ENCODE measurements at regions of chr7 and their contacts with region 1.

Region 1: DNA sequence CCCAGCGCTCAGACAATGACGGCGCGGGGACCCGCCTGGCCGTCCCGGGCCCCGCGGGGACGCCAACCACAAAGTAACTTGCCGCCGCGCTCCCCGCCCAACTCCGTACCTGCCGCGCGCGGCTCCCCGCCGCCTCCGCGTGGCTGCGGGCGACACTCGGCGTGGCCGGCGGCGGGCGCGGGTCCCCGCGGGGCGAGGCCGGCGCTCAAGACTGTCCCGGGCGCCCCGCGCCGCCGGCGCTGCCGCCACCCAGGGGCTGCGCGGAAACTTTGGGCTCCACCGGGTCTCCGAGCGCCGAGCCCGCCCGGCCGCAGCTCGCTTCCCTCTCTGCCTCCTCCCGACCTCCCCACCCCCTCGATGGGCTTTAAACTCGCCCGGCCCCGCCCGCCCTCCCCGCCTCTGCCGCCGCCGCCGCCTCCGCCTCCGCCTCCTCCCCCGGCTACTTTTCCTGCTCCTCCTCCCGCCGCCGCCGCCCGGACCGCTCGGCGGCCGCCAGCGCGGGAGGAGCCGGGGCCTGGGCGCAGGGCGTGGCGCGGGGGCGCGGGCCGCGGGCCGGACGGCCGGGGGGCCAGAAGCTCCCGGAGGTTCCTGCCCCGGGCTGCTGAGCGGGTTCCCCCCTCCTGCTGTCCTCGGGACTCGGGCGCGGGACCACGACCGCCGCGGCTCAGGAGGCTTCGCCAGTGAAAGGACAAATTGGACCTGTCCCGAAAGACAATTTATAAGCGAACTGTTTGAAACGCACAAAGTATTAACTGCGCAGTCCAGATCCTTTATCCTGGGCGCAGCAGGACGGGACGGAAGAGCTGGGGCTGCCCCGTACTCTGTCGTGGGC is 10.6 kb upstream of the GRB10 start:
- DNase-seq: peak; percentile 73
- H3K4me3 ChIP-seq: peak overlapping the region; percentile 7 to 62 (median 57)
- H3K27ac ChIP-seq: peak overlapping the region; percentile 67 to 81 (median 72)
- H3K4me1 ChIP-seq: peaks cover 7 to 28% (median 14%) of the 10 kb centered on the region in 4 donors
- H3K27me3 ChIP-seq: peaks cover 21% of the 10 kb centered on the region
- CTCF ChIP-seq: no peak
- EP300 ChIP-seq: no peak
- POLR2A ChIP-seq: no peak

Region 2: GRCh38 chr7:50679218-50680007 is 113.9 kb before region 1 on chr7:
- in situ Hi-C with region 1: no loop called
- intact Hi-C with region 1: loop called (anchors 5 kb)
- DNase-seq: no peak
- H3K4me3 ChIP-seq: no peak overlapping the region
- H3K27ac ChIP-seq: peak overlapping the region in 2 of 4 donors; percentile 0 to 8
- H3K4me1 ChIP-seq: peaks cover 9 to 44% (median 19%) of the 10 kb centered on the region in 4 donors
- H3K27me3 ChIP-seq: no peaks in the 10 kb centered on the region
- CTCF ChIP-seq: peak; percentile 31 to 50 (median 40)
- EP300 ChIP-seq: no peak
- POLR2A ChIP-seq: no peak

Region 3: GRCh38 chr7:51060536-51060935 is 267.2 kb after region 1 on chr7:
- in situ Hi-C with region 1: no loop called
- intact Hi-C with region 1: loop called (anchors 5 kb)
- DNase-seq: no peak
- H3K4me3 ChIP-seq: no peak overlapping the region
- H3K27ac ChIP-seq: no peak overlapping the region
- H3K4me1 ChIP-seq: no peaks in the 10 kb centered on the region
- H3K27me3 ChIP-seq: no peaks in the 10 kb centered on the region
- CTCF ChIP-seq: no peak
- EP300 ChIP-seq: no peak
- POLR2A ChIP-seq: no peak

Region 4: GRCh38 chr7:51328351-51328801 is 535.0 kb after region 1 on chr7:
- in situ Hi-C with region 1: no loop called
- intact Hi-C with region 1: no loop called
- DNase-seq: no peak
- H3K4me3 ChIP-seq: no peak overlapping the region
- H3K27ac ChIP-seq: no peak overlapping the region
- H3K4me1 ChIP-seq: no peaks in the 10 kb centered on the region
- H3K27me3 ChIP-seq: no peaks in the 10 kb centered on the region
- CTCF ChIP-seq: no peak
- EP300 ChIP-seq: no peak
- POLR2A ChIP-seq: no peak